ENCODE measurements at regions of chr7 and their contacts with region 1.

Region 1: GRCh38 chr7:29408841-29409243 is 154.8 kb upstream of the PRR15 start:
- DNase-seq: peak; percentile 80
- H3K4me3 ChIP-seq: no peak overlapping the region
- H3K27ac ChIP-seq: no peak overlapping the region
- H3K4me1 ChIP-seq: no peaks in the 10 kb centered on the region
- H3K27me3 ChIP-seq: no peaks in the 10 kb centered on the region
- CTCF ChIP-seq: peak; percentile 78

Region 2: GRCh38 chr7:28926871-28927597 is 481.8 kb before region 1 on chr7:
- intact Hi-C with region 1: loop called (anchors 2 kb)
- DNase-seq: peak; percentile 78
- H3K4me3 ChIP-seq: peak overlapping the region; percentile 28
- H3K27ac ChIP-seq: no peak overlapping the region
- H3K4me1 ChIP-seq: no peaks in the 10 kb centered on the region
- H3K27me3 ChIP-seq: no peaks in the 10 kb centered on the region
- CTCF ChIP-seq: peak; percentile 70

Region 3: GRCh38 chr7:29113384-29114103 is 295.3 kb before region 1 on chr7:
- intact Hi-C with region 1: loop called (anchors 5 kb)
- DNase-seq: peak; percentile 64
- H3K4me3 ChIP-seq: no peak overlapping the region
- H3K27ac ChIP-seq: no peak overlapping the region
- H3K4me1 ChIP-seq: no peaks in the 10 kb centered on the region
- H3K27me3 ChIP-seq: no peaks in the 10 kb centered on the region
- CTCF ChIP-seq: peak; percentile 25

Region 4: GRCh38 chr7:29189743-29190201 is 219.1 kb before region 1 on chr7:
- intact Hi-C with region 1: loop called (anchors 5 kb)
- DNase-seq: peak; percentile 81
- H3K4me3 ChIP-seq: no peak overlapping the region
- H3K27ac ChIP-seq: no peak overlapping the region
- H3K4me1 ChIP-seq: no peaks in the 10 kb centered on the region
- H3K27me3 ChIP-seq: no peaks in the 10 kb centered on the region
- CTCF ChIP-seq: peak; percentile 83

Region 5: DNA sequence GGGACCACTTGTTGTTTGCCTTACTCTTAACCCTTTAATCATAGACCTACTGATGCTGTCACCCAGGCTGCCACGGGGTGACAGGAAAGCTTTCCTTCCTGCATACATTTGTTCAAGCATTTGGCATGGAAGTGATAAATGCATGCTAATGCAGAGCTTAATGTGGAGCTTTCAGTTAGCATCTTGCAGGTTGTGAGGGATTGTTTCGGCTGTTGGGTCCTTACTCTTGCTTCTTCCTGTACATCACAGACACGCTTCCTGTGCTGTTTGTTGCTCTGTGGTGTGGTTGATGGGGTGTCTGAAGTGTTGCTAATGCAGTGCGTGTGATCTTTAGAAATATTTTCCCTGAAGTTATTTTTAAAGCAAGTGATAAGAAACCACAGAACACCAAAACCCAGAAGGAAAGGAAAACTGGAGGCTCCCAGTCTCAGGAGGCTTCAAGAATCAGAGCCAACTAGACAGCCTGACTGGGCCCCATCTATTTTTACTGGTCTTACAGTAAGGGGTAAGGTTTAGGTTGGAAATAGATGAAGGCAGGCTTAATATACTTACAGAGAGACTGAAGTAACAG is 71.2 kb before region 1 on chr7:
- intact Hi-C with region 1: no loop called
- DNase-seq: no peak
- H3K4me3 ChIP-seq: no peak overlapping the region
- H3K27ac ChIP-seq: no peak overlapping the region
- H3K4me1 ChIP-seq: no peaks in the 10 kb centered on the region
- H3K27me3 ChIP-seq: no peaks in the 10 kb centered on the region
- CTCF ChIP-seq: no peak

Measured in colonic mucosa (tissue), 4 donors.